ENCODE measurements at regions of chr3 and their contacts with region 1.

Region 1: GRCh38 chr3:101876142-101876541 is 26.8 kb downstream of the NFKBIZ start:
- DNase-seq: no peak
- H3K4me3 ChIP-seq: no peak overlapping the region
- H3K27ac ChIP-seq: no peak overlapping the region
- H3K4me1 ChIP-seq: peaks cover 11% of the 10 kb centered on the region
- CTCF ChIP-seq: no peak

Region 2: DNA sequence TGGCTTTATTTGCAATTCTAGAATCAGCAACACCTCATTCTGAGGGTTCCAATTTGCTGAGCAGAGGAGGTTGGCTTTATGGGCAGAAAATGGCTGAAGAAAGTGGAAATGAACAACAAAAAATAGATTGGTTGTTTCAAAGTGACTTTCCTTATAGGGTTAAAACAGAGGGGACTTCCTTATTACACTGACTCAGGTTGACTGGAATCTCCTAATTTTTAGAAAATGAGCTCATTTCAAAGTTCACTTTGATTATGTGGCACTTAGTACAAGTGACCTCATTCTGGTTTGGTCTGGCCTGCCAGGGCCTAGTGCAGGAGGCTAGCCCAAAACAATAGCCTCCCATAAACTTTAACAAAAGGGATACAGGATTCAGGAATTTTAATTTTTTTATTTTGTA is 14.6 kb after region 1 on chr3:
- CTCF ChIA-PET with region 1: no interaction called
- POLR2A ChIA-PET with region 1: interaction called, 11 read pairs
- intact Hi-C with region 1: no loop called
- DNase-seq: no peak
- H3K4me3 ChIP-seq: no peak overlapping the region
- H3K27ac ChIP-seq: no peak overlapping the region
- H3K4me1 ChIP-seq: peaks cover 23% of the 10 kb centered on the region
- CTCF ChIP-seq: no peak

Measured in OCI-LY7 (cell line).